Uterus (tissue), 4 donors: ENCODE measurements at regions of chr15 and their contacts with region 1.

Region 1: DNA sequence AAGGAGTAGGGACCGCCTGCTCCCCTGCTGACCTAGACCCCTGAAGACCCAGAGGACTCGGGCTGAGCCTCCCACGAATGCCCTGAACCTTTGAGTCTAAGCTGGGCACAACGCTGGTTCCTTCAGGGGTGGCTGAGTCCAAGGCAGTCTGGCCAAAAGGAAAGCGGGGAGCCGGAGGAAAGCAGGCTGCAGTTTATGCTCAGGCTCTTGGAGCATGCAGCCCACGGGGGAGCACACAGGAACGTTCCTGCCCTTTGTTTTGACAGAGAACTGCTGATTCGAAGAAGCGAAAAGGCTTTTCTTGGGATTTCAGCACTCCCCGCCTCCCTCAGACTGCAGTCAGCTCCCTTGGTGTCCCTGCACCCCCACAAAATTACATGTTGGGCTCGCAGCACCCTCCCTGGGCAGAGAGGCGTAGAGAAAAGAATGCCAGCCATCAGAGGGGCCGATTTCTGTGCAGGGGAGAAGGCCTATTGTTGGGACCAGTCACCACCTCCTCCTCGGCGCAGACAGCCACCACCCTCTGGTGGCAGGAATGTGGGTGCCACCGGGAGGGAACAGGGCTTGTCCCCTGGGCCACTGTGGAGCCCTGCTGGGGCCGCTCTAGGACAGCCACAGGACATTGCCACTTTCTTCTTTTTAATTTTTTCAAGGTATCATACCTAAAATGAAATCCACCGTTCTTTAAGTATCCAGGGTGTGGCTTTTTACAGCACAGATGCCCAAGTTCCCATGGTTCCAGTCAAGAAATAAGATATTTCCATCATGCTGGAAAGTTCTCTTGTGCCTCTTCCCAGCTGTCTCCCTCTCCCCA is 72.2 kb downstream of the SMAD6 start:
- DNase-seq: peak; percentile 84 to 88
- H3K4me3 ChIP-seq: no peak overlapping the region
- H3K27ac ChIP-seq: peak overlapping the region; percentile 80 to 83
- H3K4me1 ChIP-seq: peaks cover 6 to 15% of the 10 kb centered on the region in 2 donors
- H3K27me3 ChIP-seq: no peaks in the 10 kb centered on the region
- CTCF ChIP-seq: peak; percentile 95 to 98 (median 97)
- POLR2A ChIP-seq: peak in 1 of 2 donors; percentile 15

Region 2: GRCh38 chr15:66545249-66545648 is 229.0 kb before region 1 on chr15:
- intact Hi-C with region 1: no loop called
- DNase-seq: no peak
- H3K4me3 ChIP-seq: no peak overlapping the region
- H3K27ac ChIP-seq: no peak overlapping the region
- H3K4me1 ChIP-seq: no peaks in the 10 kb centered on the region
- H3K27me3 ChIP-seq: no peaks in the 10 kb centered on the region
- CTCF ChIP-seq: no peak
- POLR2A ChIP-seq: no peak

Region 3: GRCh38 chr15:66619151-66619903 is 154.9 kb before region 1 on chr15:
- intact Hi-C with region 1: loop called (anchors 10 kb)
- DNase-seq: peak; percentile 76 to 77
- H3K4me3 ChIP-seq: no peak overlapping the region
- H3K27ac ChIP-seq: peak overlapping the region; percentile 6 to 21
- H3K4me1 ChIP-seq: peaks cover 0 to 9% of the 10 kb centered on the region in 2 donors
- H3K27me3 ChIP-seq: no peaks in the 10 kb centered on the region
- CTCF ChIP-seq: peak; percentile 89 to 94 (median 92)
- POLR2A ChIP-seq: no peak

Region 4: GRCh38 chr15:66707310-66708082 is 66.7 kb before region 1 on chr15:
- intact Hi-C with region 1: loop called (anchors 5 kb)
- DNase-seq: peak; percentile 61
- H3K4me3 ChIP-seq: no peak overlapping the region
- H3K27ac ChIP-seq: peak overlapping the region; percentile 58 to 69
- H3K4me1 ChIP-seq: peaks cover 0 to 11% of the 10 kb centered on the region in 2 donors
- H3K27me3 ChIP-seq: no peaks in the 10 kb centered on the region
- CTCF ChIP-seq: peak in 3 of 4 experiments; percentile 17 to 34 (median 28)
- POLR2A ChIP-seq: no peak

Region 5: DNA sequence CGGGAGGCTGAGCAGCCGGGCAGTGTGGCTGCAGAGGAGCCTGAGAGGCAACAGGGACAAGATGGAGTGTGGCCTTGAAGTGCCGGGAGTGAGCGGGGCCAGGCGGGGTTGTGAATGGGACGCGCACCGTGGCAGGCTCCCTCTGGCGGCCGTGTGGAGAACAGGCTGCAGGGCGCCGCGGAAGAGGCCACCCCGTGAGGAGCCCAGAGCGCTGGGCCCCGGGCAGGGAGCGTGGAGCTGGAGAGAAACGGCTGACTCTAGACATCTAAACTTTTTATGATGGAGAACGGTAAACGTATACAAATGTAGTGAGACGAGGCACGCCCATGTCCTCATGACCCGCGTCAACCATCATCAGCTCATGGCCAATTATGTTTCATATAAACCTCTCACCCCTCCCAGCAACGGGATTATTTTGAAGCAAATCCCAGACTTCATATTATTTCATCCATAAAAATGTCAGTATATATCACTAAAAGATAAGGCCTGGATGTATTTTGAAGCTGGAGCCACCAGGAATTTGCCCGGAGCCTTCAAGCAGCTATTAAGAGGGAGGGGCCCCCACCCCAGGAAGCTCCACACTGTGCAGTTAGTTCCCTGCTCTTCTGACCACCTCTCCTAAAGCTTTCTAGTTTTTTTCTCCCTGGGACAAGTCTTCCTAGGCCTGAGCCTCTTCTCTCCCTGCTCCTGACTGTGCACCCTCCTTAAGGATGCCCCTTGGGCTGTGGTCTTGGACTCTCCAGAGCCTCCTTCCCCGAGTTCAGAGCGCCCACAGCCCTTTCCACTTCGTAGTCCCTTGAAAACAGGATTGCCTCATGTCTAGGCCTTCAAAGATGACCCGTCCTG is 77.2 kb after region 1 on chr15:
- intact Hi-C with region 1: loop called (anchors 5 kb)
- DNase-seq: peak; percentile 85 to 88
- H3K4me3 ChIP-seq: no peak overlapping the region
- H3K27ac ChIP-seq: peak overlapping the region; percentile 79 to 86
- H3K4me1 ChIP-seq: peaks cover 0 to 9% of the 10 kb centered on the region in 2 donors
- H3K27me3 ChIP-seq: no peaks in the 10 kb centered on the region
- CTCF ChIP-seq: peak; percentile 94 to 98 (median 96)
- POLR2A ChIP-seq: peak in 1 of 2 donors; percentile 15

Region 6: GRCh38 chr15:66883322-66883911 is 109.2 kb after region 1 on chr15:
- intact Hi-C with region 1: no loop called
- DNase-seq: peak; percentile 94 to 95
- H3K4me3 ChIP-seq: no peak overlapping the region
- H3K27ac ChIP-seq: peak overlapping the region; percentile 84 to 90
- H3K4me1 ChIP-seq: peaks cover 4 to 5% of the 10 kb centered on the region in 2 donors
- H3K27me3 ChIP-seq: no peaks in the 10 kb centered on the region
- CTCF ChIP-seq: peak in 1 of 4 experiments; percentile 15
- POLR2A ChIP-seq: peak; percentile 7 to 12

Region 7: GRCh38 chr15:66946578-66947164 is 172.5 kb after region 1 on chr15:
- intact Hi-C with region 1: no loop called
- DNase-seq: peak; percentile 70 to 74
- H3K4me3 ChIP-seq: no peak overlapping the region
- H3K27ac ChIP-seq: no peak overlapping the region
- H3K4me1 ChIP-seq: no peaks in the 10 kb centered on the region
- H3K27me3 ChIP-seq: no peaks in the 10 kb centered on the region
- CTCF ChIP-seq: peak; percentile 90 to 93 (median 92)
- POLR2A ChIP-seq: no peak

Region 8: DNA sequence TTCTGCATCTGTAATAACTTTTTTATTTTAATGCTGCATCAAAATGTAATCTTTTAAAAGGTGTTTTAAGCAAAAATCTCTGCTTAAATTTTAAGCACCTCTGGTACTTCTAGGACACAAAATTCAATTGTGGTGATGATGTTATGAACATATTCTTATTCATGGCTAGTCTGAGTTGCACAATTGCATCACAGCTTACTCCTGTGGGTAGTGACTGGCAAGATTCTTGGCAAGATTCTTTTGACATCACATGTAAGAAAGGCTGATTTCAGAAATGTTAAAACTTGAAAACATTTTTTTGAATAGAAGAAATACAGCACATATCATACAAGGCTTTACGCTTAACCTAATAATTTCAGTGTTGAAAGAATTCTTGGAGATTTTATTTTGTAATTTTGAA is 516.1 kb after region 1 on chr15:
- intact Hi-C with region 1: no loop called
- DNase-seq: no peak
- H3K4me3 ChIP-seq: no peak overlapping the region
- H3K27ac ChIP-seq: no peak overlapping the region
- H3K4me1 ChIP-seq: no peaks in the 10 kb centered on the region
- H3K27me3 ChIP-seq: no peaks in the 10 kb centered on the region
- CTCF ChIP-seq: no peak
- POLR2A ChIP-seq: no peak